Activated CD4-positive, alpha-beta memory T cell treated with anti-CD3 and anti-CD28 coated beads for 36 hours (primary cell): ENCODE measurements at regions of chr13 and their contacts with region 1.

Region 1: DNA sequence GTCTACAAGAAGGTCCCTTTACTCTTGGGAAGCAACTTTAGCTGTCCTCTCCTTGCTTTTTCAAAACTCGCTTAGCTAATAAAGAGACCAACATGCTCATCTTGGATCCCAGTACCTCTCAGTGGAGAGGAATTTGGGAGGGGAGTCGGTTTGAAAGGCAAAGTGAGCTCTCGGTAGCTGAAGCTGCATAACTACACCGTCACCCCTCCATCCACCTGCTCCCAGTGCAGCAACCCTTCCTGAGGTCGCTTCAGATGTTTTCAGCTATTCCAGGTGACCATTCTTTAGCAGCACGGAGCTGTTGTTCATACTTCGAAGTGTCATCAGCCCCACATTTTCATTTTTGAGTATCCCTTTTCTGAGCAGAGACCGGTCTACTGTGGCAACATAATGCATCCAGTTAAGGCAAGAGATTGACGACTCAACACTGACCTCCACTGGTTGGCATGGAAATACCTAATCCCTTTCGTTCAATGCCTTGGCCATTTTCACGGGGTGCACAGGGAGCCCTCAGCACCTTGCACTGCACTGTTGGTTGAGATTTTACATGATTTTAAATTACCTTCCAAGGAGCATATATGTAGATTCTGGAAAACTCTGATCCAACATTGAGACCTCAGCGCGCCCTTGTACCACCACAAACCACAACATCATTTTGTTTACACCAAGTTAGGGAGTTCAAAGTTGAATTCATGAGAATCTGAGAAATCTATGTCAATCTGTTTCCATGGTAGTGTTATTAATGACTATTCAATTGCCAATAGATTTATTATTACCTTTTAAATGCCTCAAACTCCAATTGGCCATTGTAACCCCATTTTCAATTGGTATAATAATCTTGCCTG is 42.2 kb downstream of the DLEU7 start:
- DNase-seq: peak; percentile 70
- H3K4me3 Mint-ChIP-seq: no peak overlapping the region
- H3K27ac Mint-ChIP-seq: no peak overlapping the region
- H3K4me1 Mint-ChIP-seq: peaks cover 4% of the 10 kb centered on the region
- H3K27me3 Mint-ChIP-seq: peaks cover 1% of the 10 kb centered on the region

Region 2: DNA sequence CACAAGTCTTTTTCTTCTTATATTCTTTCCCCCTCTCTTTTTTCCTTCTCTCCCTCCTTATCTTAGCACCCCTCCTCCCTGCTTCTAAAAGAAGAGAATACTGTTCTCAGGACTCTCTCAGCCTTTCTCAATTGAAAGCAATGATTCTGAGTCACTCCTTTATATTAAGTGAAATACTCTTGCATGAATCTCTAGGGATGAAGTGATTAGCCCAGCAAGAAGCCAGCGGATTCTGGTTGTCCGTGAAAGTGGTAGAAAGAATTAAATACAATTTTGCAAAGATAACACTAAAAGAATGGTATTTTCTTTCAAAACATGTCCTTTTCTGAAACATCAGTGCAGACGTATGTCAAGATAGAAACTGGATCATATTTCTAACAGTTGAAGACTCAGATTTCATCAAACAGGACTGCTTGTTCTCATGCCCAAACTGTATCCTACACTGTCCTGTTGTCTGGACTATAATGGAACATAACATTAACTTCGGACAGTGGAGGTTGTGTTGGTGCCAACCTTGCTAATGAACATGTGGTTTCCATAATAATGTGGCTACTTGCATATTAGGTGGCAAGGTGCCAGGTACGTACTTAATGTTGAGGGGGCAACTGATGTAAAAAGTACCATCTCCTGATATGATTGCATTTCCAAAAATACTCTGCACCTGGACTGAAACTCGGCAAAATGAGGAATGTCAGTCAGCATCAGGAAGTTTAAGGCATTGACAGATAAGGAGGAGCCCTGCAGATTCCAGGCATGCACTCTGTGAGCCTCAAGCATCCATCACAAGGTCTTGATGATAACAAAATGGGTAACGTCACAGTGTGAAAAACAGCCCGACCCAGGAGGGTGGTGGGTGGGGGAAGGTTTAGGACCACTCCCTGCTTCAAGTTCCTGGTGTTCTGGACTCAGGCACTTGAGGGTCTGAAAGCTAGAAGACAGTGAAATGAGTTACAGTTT is 315.1 kb before region 1 on chr13:
- CTCF ChIA-PET with region 1: no interaction called
- POLR2A ChIA-PET with region 1: no interaction called
- intact Hi-C with region 1: no loop called
- DNase-seq: no peak
- H3K4me3 Mint-ChIP-seq: no peak overlapping the region
- H3K27ac Mint-ChIP-seq: no peak overlapping the region
- H3K4me1 Mint-ChIP-seq: no peaks in the 10 kb centered on the region
- H3K27me3 Mint-ChIP-seq: no peaks in the 10 kb centered on the region

Region 3: GRCh38 chr13:50531917-50532899 is 269.1 kb before region 1 on chr13:
- CTCF ChIA-PET with region 1: no interaction called
- POLR2A ChIA-PET with region 1: no interaction called
- intact Hi-C with region 1: loop called (anchors 5 kb)
- DNase-seq: no peak
- H3K4me3 Mint-ChIP-seq: no peak overlapping the region
- H3K27ac Mint-ChIP-seq: no peak overlapping the region
- H3K4me1 Mint-ChIP-seq: peaks cover 15% of the 10 kb centered on the region
- H3K27me3 Mint-ChIP-seq: no peaks in the 10 kb centered on the region

Region 4: GRCh38 chr13:50845211-50845610 is 43.9 kb after region 1 on chr13:
- CTCF ChIA-PET with region 1: no interaction called
- POLR2A ChIA-PET with region 1: no interaction called
- intact Hi-C with region 1: no loop called
- DNase-seq: no peak
- H3K4me3 Mint-ChIP-seq: no peak overlapping the region
- H3K27ac Mint-ChIP-seq: no peak overlapping the region
- H3K4me1 Mint-ChIP-seq: peaks cover 9% of the 10 kb centered on the region
- H3K27me3 Mint-ChIP-seq: peaks cover 9% of the 10 kb centered on the region

Region 5: GRCh38 chr13:51070005-51070649 is 268.8 kb after region 1 on chr13:
- CTCF ChIA-PET with region 1: interaction called, 3 read pairs
- POLR2A ChIA-PET with region 1: no interaction called
- intact Hi-C with region 1: loop called (anchors 10 kb)
- DNase-seq: peak; percentile 86
- H3K4me3 Mint-ChIP-seq: no peak overlapping the region
- H3K27ac Mint-ChIP-seq: no peak overlapping the region
- H3K4me1 Mint-ChIP-seq: peaks cover 5% of the 10 kb centered on the region
- H3K27me3 Mint-ChIP-seq: peaks cover 18% of the 10 kb centered on the region